ENCODE measurements at regions of chr3 and their contacts with region 1.

Region 1: GRCh38 chr3:158727206-158728060 is 4.8 kb downstream of the RARRES1 start:
- DNase-seq: peak in 3 of 5 donors; percentile 49 to 76 (median 49)
- H3K4me3 ChIP-seq: peak overlapping the region; percentile 14
- H3K27ac ChIP-seq: peak overlapping the region; percentile 46 to 52
- H3K4me1 ChIP-seq: peaks cover 20% of the 10 kb centered on the region
- H3K27me3 ChIP-seq: no peaks in the 10 kb centered on the region
- CTCF ChIP-seq: peak; percentile 75 to 94 (median 80)
- EP300 ChIP-seq: no peak
- POLR2A ChIP-seq: no peak

Region 2: DNA sequence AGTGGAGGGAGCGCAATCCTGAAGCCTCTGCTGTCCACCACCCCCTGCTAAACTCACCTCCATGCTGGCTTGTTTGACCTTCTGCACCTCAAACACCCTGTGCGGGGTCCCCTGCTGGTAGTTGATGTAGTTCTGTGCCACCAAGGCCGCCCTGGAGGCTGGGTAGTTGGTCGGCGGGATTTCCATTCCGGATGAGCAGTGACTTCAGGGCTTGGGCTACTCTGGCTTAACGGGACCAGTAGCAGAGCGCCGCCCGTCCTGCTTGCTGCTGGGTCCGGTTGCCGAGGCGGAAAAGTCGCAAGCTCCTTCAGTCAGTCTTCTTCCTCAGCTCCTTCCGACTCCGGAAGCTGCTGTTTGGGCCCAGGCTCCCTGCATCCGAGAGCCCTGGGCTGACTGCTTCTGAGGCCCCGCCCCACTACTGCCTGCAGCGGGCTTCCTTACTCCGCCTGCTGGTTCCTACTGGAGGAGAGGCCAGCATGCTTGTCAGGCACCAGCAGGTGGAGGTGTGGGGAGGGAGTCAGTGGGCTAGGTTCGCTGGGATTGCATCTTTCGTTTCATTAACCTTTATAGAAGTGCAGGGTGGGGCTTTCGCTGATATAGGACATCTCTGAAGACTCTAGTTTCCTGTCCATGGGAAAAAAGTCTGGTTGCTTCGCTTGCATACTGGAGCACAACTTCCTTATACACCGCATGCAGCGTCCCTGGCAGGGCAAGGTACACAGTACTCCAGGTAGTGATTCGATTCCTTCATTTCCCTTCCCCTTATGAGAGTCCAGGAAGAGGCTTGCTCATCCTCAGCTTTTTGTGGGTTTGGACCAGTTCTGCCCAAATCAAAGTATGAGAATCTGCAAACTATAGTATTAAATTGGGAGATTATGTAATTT is 54.9 kb before region 1 on chr3 and contains the start of gene LXN:
- intact Hi-C with region 1: loop called in 1 of 4 experiments (anchors 10 kb)
- DNase-seq: peak; percentile 81 to 85 (median 83)
- H3K4me3 ChIP-seq: peak within 1 kb of the TSS; percentile 58
- H3K27ac ChIP-seq: peak within 1 kb of the TSS; percentile 18 to 64
- H3K4me1 ChIP-seq: no peaks in the 10 kb centered on the region
- H3K27me3 ChIP-seq: no peaks in the 10 kb centered on the region
- CTCF ChIP-seq: peak; percentile 57 to 69 (median 68)
- EP300 ChIP-seq: no peak
- POLR2A ChIP-seq: no peak
- total RNA-seq, gene LXN: 16.5 to 82.9 (median 43.5) TPM

Region 3: GRCh38 chr3:158773845-158774830 is 46.7 kb after region 1 on chr3:
- intact Hi-C with region 1: loop called in 2 of 4 experiments (anchors 5 kb)
- DNase-seq: no peak
- H3K4me3 ChIP-seq: no peak overlapping the region
- H3K27ac ChIP-seq: no peak overlapping the region
- H3K4me1 ChIP-seq: peaks cover 10% of the 10 kb centered on the region
- H3K27me3 ChIP-seq: no peaks in the 10 kb centered on the region
- CTCF ChIP-seq: no peak
- EP300 ChIP-seq: peak; percentile 80
- POLR2A ChIP-seq: no peak

Region 4: GRCh38 chr3:158790901-158791589 is 63.6 kb after region 1 on chr3:
- intact Hi-C with region 1: loop called in 3 of 4 experiments (anchors 2 to 5 kb)
- DNase-seq: peak in 1 of 5 donors; percentile 45
- H3K4me3 ChIP-seq: peak overlapping the region; percentile 21
- H3K27ac ChIP-seq: no peak overlapping the region
- H3K4me1 ChIP-seq: no peaks in the 10 kb centered on the region
- H3K27me3 ChIP-seq: no peaks in the 10 kb centered on the region
- CTCF ChIP-seq: peak; percentile 71 to 83 (median 73)
- EP300 ChIP-seq: no peak
- POLR2A ChIP-seq: no peak

Region 5: DNA sequence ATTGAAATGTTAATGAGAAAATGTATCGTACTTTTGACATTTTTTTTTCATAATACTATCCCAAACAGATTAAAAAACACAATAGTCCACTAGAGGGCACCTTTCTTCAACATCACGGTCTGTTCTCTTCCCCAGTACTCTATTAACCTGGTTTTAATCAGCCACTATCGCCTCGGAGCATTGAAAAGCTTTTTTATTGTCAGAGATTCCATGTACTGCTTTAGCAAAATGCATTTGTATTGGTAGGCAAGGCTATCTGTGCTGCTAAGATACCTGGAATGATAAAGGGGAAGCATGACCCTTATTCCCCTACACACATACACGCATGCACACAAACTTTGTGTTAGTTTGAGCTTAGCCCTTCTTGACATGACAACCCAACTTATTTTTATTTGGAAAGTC is 1101.1 kb after region 1 on chr3:
- intact Hi-C with region 1: no loop called
- DNase-seq: no peak
- H3K4me3 ChIP-seq: no peak overlapping the region
- H3K27ac ChIP-seq: no peak overlapping the region
- H3K4me1 ChIP-seq: no peaks in the 10 kb centered on the region
- H3K27me3 ChIP-seq: no peaks in the 10 kb centered on the region
- CTCF ChIP-seq: peak in 1 of 3 donors; percentile 16
- EP300 ChIP-seq: no peak
- POLR2A ChIP-seq: no peak

Measured in ovary (tissue), 10 donors.